Heart left ventricle (tissue), 16 donors: ENCODE measurements at regions of chr5 and their contacts with region 1.

Region 1: GRCh38 chr5:132813599-132814502 is 749 bp downstream of the SOWAHA start:
- DNase-seq: peak in 2 of 5 donors; percentile 31 to 65
- ATAC-seq: peak in 3 of 4 donors; percentile 20 to 80 (median 59)
- H3K4me3 ChIP-seq: peak overlapping the region; percentile 23 to 52 (median 40)
- H3K27ac ChIP-seq: no peak overlapping the region
- H3K4me1 ChIP-seq: peaks cover 0 to 18% (median 3%) of the 10 kb centered on the region in 12 donors
- H3K27me3 ChIP-seq: peaks cover 20 to 59% (median 33%) of the 10 kb centered on the region in 9 donors
- CTCF ChIP-seq: no peak
- POLR2A ChIP-seq: no peak

Region 2: DNA sequence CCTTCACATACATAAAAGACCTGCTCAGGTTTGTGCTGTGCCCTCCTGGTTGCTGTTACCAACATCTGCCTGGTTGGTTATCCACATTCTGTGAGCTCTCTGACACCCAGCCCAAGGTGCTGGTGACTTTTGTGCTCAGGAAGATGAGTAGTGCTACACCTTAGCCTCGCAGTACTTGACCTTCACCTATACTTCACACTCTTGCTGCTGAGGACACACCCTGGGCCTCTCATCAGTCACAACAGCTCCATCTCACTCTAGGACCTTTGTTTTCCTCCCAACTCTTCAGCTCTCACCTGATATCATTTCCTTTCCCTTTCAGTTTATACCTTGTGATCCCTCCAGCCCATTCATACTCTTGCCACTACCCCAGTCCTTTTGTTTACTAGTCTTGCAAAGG is 455.1 kb before region 1 on chr5:
- intact Hi-C with region 1: no loop called
- DNase-seq: no peak
- ATAC-seq: no peak
- H3K4me3 ChIP-seq: no peak overlapping the region
- H3K27ac ChIP-seq: peak overlapping the region in 9 of 12 donors; percentile 23 to 83 (median 68)
- H3K4me1 ChIP-seq: peaks cover 0 to 42% (median 18%) of the 10 kb centered on the region in 12 donors
- H3K27me3 ChIP-seq: no peaks in the 10 kb centered on the region
- CTCF ChIP-seq: no peak
- POLR2A ChIP-seq: no peak

Region 3: GRCh38 chr5:132369474-132370180 is 444.2 kb before region 1 on chr5 and contains the start of gene SLC22A5:
- intact Hi-C with region 1: loop called in 1 of 10 experiments (anchors 10 kb)
- DNase-seq: peak; percentile 56 to 83 (median 75)
- ATAC-seq: peak; percentile 62 to 91 (median 82)
- H3K4me3 ChIP-seq: peak within 1 kb of the TSS; percentile 66 to 90 (median 78)
- H3K27ac ChIP-seq: peak within 1 kb of the TSS; percentile 64 to 94 (median 88)
- H3K4me1 ChIP-seq: peaks cover 0 to 42% (median 22%) of the 10 kb centered on the region in 12 donors
- H3K27me3 ChIP-seq: no peaks in the 10 kb centered on the region
- CTCF ChIP-seq: no peak
- POLR2A ChIP-seq: peak in 1 of 2 donors; percentile 50
- total RNA-seq, gene SLC22A5: 7.5 to 42.5 (median 13.5) TPM

Region 4: GRCh38 chr5:132526290-132526973 is 287.4 kb before region 1 on chr5:
- intact Hi-C with region 1: loop called in 5 of 10 experiments (anchors 10 kb)
- DNase-seq: peak in 2 of 5 donors; percentile 17 to 23
- ATAC-seq: peak; percentile 20 to 83 (median 79)
- H3K4me3 ChIP-seq: no peak overlapping the region
- H3K27ac ChIP-seq: no peak overlapping the region
- H3K4me1 ChIP-seq: peaks cover 0 to 6% (median 0%) of the 10 kb centered on the region in 12 donors
- H3K27me3 ChIP-seq: no peaks in the 10 kb centered on the region
- CTCF ChIP-seq: peak; percentile 74 to 84 (median 80)
- POLR2A ChIP-seq: no peak

Region 5: GRCh38 chr5:132753135-132753987 is 60.5 kb before region 1 on chr5:
- intact Hi-C with region 1: loop called in 2 of 10 experiments (anchors 5 to 10 kb)
- DNase-seq: no peak
- ATAC-seq: peak in 2 of 4 donors; percentile 24 to 45
- H3K4me3 ChIP-seq: no peak overlapping the region
- H3K27ac ChIP-seq: no peak overlapping the region
- H3K4me1 ChIP-seq: peaks cover 0 to 2% (median 0%) of the 10 kb centered on the region in 12 donors
- H3K27me3 ChIP-seq: peaks cover 0 to 2% (median 0%) of the 10 kb centered on the region in 9 donors
- CTCF ChIP-seq: peak in 2 of 12 donors; percentile 12
- POLR2A ChIP-seq: no peak

Region 6: DNA sequence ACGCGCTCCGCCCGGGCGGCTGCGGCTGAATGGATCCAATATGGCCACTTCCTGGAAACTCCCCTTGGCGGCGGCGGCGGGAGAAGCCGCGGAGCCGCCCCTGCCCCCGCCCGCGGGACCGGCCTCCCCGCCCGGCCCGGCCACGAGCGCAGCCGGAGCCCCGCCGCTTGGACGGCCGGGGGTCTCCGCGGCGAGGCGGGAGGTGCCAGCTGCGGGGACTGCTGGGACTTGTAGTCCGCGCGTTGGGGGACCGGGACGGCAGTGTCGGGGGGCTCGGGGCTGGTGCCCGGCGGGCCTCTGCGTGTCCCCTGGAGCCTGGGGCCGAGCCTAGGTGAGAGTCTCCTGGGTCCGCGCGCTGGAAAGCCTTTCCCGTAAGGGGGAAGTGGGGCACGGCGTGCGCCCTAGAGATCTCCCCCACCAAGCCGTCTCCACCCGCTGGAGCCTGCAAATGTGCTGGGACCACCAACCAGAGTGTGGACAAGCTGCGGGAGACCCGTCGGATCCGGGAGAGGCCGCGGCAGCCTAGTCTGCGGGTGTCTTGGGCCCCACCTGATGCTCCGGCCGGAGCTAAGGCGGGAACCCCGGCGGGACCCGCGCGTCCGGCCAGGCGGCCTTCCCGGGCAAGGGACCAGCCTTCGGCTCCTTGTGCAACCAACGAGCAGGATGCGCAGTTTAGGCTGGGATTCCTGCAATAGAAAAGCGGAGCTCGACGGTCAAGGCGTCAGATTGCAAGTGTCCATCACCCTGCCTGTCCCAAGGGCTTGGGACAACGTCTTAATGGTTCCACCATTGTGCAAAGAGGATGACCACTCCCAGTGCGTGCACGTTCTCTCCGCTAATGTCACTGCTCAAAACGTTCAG is 36.4 kb before region 1 on chr5 and contains the start of gene SEPTIN8:
- intact Hi-C with region 1: loop called in 3 of 10 experiments (anchors 5 kb)
- DNase-seq: peak; percentile 56 to 75 (median 70)
- ATAC-seq: peak in 3 of 4 donors; percentile 58 to 66 (median 59)
- H3K4me3 ChIP-seq: peak within 1 kb of the TSS; percentile 65 to 98 (median 90)
- H3K27ac ChIP-seq: peak within 1 kb of the TSS; percentile 72 to 92 (median 86)
- H3K4me1 ChIP-seq: peaks cover 0 to 52% (median 33%) of the 10 kb centered on the region in 12 donors
- H3K27me3 ChIP-seq: peaks cover 0 to 4% (median 0%) of the 10 kb centered on the region in 9 donors
- CTCF ChIP-seq: peak in 1 of 12 donors; percentile 11
- POLR2A ChIP-seq: peak in 1 of 2 donors; percentile 15
- total RNA-seq, gene SEPTIN8: 24.5 to 47.6 (median 33.8) TPM